ENCODE measurements at regions of chr10 and their contacts with region 1.

Region 1: GRCh38 chr10:114541081-114541796 is 116.8 kb downstream of the ABLIM1 start:
- DNase-seq: peak; percentile 80
- H3K4me3 Mint-ChIP-seq: peak overlapping the region; percentile 66
- H3K27ac Mint-ChIP-seq: peak overlapping the region; percentile 100
- H3K4me1 Mint-ChIP-seq: peaks cover 79% of the 10 kb centered on the region
- H3K27me3 Mint-ChIP-seq: no peaks in the 10 kb centered on the region

Region 2: GRCh38 chr10:113854011-113854760 is 687.1 kb before region 1 on chr10 and contains the starts of genes DCLRE1A and NHLRC2:
- intact Hi-C with region 1: loop called (anchors 5 kb)
- DNase-seq: peak; percentile 29
- H3K4me3 Mint-ChIP-seq: peak within 1 kb of the TSS; percentile 97
- H3K27ac Mint-ChIP-seq: peak within 1 kb of the TSS; percentile 95
- H3K4me1 Mint-ChIP-seq: peaks cover 56% of the 10 kb centered on the region
- H3K27me3 Mint-ChIP-seq: no peaks in the 10 kb centered on the region
- total RNA-seq, gene DCLRE1A: 14.1 and 15.2 TPM in 2 replicates
- total RNA-seq, gene NHLRC2: 25.9 and 26.0 TPM in 2 replicates

Region 3: GRCh38 chr10:114492351-114493037 is 48.7 kb before region 1 on chr10:
- intact Hi-C with region 1: loop called (anchors 1 kb)
- DNase-seq: peak; percentile 22
- H3K4me3 Mint-ChIP-seq: no peak overlapping the region
- H3K27ac Mint-ChIP-seq: peak overlapping the region; percentile 67
- H3K4me1 Mint-ChIP-seq: peaks cover 56% of the 10 kb centered on the region
- H3K27me3 Mint-ChIP-seq: no peaks in the 10 kb centered on the region

Region 4: GRCh38 chr10:114526504-114527238 is 14.6 kb before region 1 on chr10:
- intact Hi-C with region 1: loop called (anchors 1 kb)
- DNase-seq: peak; percentile 88
- H3K4me3 Mint-ChIP-seq: peak overlapping the region; percentile 83
- H3K27ac Mint-ChIP-seq: peak overlapping the region; percentile 94
- H3K4me1 Mint-ChIP-seq: peaks cover 57% of the 10 kb centered on the region
- H3K27me3 Mint-ChIP-seq: no peaks in the 10 kb centered on the region

Region 5: GRCh38 chr10:114821293-114821914 is 280.2 kb after region 1 on chr10 and contains the start of gene FHIP2A:
- intact Hi-C with region 1: loop called (anchors 2 kb)
- DNase-seq: peak; percentile 82
- H3K4me3 Mint-ChIP-seq: peak within 1 kb of the TSS; percentile 93
- H3K27ac Mint-ChIP-seq: peak within 1 kb of the TSS; percentile 86
- H3K4me1 Mint-ChIP-seq: peaks cover 42% of the 10 kb centered on the region
- H3K27me3 Mint-ChIP-seq: peaks cover 19% of the 10 kb centered on the region
- total RNA-seq, gene FHIP2A: 26.3 and 26.9 TPM in 2 replicates